ENCODE measurements at regions of chr22 and their contacts with region 1.

Region 1: DNA sequence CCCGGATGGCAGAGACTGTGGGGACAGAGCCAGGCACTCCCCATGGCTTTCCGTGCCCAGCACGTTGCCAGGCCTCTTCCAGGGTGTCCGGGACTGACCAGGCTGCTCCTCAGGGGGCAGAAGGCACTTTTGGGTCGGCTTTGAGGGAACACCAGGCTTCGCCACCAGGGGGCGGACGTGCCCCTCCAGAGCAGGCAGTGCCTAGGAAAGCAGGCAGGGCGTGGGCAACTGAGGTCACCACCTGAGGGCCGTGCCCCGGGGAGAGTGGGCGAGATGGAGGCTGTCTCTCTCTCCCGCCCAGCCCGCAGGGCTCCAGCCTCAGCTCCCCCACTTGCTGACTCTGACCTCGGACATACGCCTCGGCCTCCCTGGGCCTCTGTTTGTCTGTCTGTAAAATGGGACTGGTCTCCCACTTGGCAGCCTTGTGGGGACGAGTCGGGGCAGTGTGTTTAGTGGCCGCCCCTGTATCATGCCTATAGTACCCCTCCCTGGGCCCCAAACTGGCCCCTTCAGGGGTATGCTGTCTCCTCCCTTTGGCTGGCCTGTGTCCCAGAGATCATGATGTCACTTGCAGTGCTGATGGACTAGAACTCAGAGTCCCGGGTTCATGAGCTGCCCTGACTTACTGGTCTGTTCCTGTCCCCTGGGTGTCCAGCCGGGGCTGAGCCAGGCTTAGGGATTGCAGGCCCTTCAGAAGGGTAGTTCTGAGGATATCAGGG is 4.4 kb upstream of the PRR5 start:
- DNase-seq: peak; percentile 94
- H3K4me3 ChIP-seq: no peak overlapping the region
- H3K27ac ChIP-seq: peak overlapping the region in 3 of 8 donors; percentile 51 to 60 (median 53)
- H3K4me1 ChIP-seq: peaks cover 6 to 42% (median 29%) of the 10 kb centered on the region in 6 donors
- H3K27me3 ChIP-seq: peaks cover 0 to 8% (median 0%) of the 10 kb centered on the region in 7 donors
- CTCF ChIP-seq: peak; percentile 82 to 95 (median 92)
- POLR2A ChIP-seq: no peak

Region 2: DNA sequence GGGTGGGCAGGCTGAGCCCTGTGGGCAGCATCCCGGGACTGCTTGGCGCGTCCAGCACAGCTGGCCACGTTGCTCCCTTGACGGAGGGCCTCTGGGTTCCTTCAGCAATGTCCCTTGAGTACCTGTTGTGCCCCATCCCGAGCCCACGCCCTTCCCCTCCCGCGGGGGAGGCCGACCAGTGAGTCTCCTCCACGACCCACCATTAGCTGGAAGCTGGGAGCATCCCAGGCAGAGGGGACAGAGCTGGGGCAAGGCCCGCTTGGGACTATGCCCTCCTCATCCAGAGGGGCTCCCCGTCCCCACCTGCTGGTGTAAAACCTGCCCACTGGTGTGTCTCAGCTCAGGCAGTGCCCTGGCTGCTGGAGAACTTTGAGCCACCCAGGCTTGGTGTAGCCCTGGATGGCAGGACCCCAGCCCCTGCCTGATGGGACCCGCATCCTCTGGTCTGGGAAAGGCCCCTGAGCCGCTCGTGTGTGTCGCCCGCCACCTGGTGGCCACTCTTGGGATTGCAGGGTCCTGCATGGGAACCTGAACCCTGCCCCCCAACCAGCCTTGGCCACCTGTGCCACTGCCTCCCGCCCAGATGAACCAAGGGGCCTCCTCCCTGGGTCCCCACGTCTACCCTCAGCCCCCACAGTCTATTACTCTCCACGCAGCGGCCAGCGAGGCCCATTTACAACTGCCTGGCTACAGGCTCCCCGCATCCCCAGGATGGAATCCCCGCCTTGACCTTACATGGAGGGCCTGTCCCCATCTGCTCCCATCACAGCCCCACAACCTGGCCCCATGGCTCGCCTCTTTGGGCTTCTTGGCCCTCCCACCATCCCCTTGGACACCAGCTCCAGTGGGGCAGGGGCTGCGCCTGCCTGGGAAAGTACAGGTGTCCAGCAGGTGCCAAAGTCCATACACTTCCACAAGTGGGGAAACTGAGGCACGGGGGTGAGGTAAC is 38.2 kb after region 1 on chr22:
- intact Hi-C with region 1: loop called (anchors 2 kb)
- DNase-seq: peak; percentile 94
- H3K4me3 ChIP-seq: no peak overlapping the region
- H3K27ac ChIP-seq: peak overlapping the region in 3 of 8 donors; percentile 2 to 30 (median 3)
- H3K4me1 ChIP-seq: peaks cover 0 to 47% (median 21%) of the 10 kb centered on the region in 6 donors
- H3K27me3 ChIP-seq: no peaks in the 10 kb centered on the region
- CTCF ChIP-seq: peak; percentile 94 to 99 (median 98)
- POLR2A ChIP-seq: no peak

Region 3: GRCh38 chr22:44955102-44955501 is 257.5 kb after region 1 on chr22:
- intact Hi-C with region 1: no loop called
- DNase-seq: no peak
- H3K4me3 ChIP-seq: no peak overlapping the region
- H3K27ac ChIP-seq: no peak overlapping the region
- H3K4me1 ChIP-seq: no peaks in the 10 kb centered on the region
- H3K27me3 ChIP-seq: peaks cover 0 to 60% (median 0%) of the 10 kb centered on the region in 7 donors
- CTCF ChIP-seq: no peak
- POLR2A ChIP-seq: no peak

Measured in spleen (tissue), 13 donors.